ENCODE measurements at regions of chr7 and their contacts with region 1.

Region 1: GRCh38 chr7:93551063-93551904 is 23.2 kb downstream of the CALCR start:
- DNase-seq: peak; percentile 47 to 72 (median 70)
- H3K4me3 ChIP-seq: no peak overlapping the region
- H3K27ac ChIP-seq: no peak overlapping the region
- H3K4me1 ChIP-seq: no peaks in the 10 kb centered on the region
- H3K27me3 ChIP-seq: no peaks in the 10 kb centered on the region

Region 2: GRCh38 chr7:93178212-93178611 is 373.1 kb before region 1 on chr7:
- CTCF ChIA-PET with region 1: interaction called, 14 read pairs
- POLR2A ChIA-PET with region 1: no interaction called
- DNase-seq: peak; percentile 43 to 68 (median 63)
- H3K4me3 ChIP-seq: no peak overlapping the region
- H3K27ac ChIP-seq: no peak overlapping the region
- H3K4me1 ChIP-seq: no peaks in the 10 kb centered on the region
- H3K27me3 ChIP-seq: peaks cover 0 to 3% (median 0%) of the 10 kb centered on the region in 5 experiments

Region 3: GRCh38 chr7:93245525-93246432 is 305.5 kb before region 1 on chr7:
- CTCF ChIA-PET with region 1: interaction called, 33 read pairs
- POLR2A ChIA-PET with region 1: no interaction called
- DNase-seq: peak; percentile 36 to 61 (median 52)
- H3K4me3 ChIP-seq: peak overlapping the region in 1 of 7 experiments; percentile 1
- H3K27ac ChIP-seq: no peak overlapping the region
- H3K4me1 ChIP-seq: peaks cover 0 to 2% (median 0%) of the 10 kb centered on the region in 4 experiments
- H3K27me3 ChIP-seq: no peaks in the 10 kb centered on the region

Region 4: GRCh38 chr7:93563584-93563983 is 12.3 kb after region 1 on chr7:
- CTCF ChIA-PET with region 1: interaction called, 10 read pairs
- POLR2A ChIA-PET with region 1: no interaction called
- DNase-seq: peak in 2 of 3 donors; percentile 41 to 45
- H3K4me3 ChIP-seq: no peak overlapping the region
- H3K27ac ChIP-seq: no peak overlapping the region
- H3K4me1 ChIP-seq: peaks cover 0 to 17% (median 11%) of the 10 kb centered on the region in 4 experiments
- H3K27me3 ChIP-seq: no peaks in the 10 kb centered on the region

Region 5: GRCh38 chr7:93973134-93973533 is 421.9 kb after region 1 on chr7:
- CTCF ChIA-PET with region 1: no interaction called
- POLR2A ChIA-PET with region 1: no interaction called
- DNase-seq: no peak
- H3K4me3 ChIP-seq: no peak overlapping the region
- H3K27ac ChIP-seq: no peak overlapping the region
- H3K4me1 ChIP-seq: peaks cover 0 to 8% (median 3%) of the 10 kb centered on the region in 4 experiments
- H3K27me3 ChIP-seq: no peaks in the 10 kb centered on the region